CD14-positive monocyte (primary cell): ENCODE measurements at regions of chr19 and their contacts with region 1.

Region 1: GRCh38 chr19:58182989-58183816 is at the start of gene ZNF274:
- DNase-seq: peak; percentile 92 to 95 (median 95)
- H3K4me3 ChIP-seq: peak within 1 kb of the TSS; percentile 60 to 84 (median 67)
- H3K4me3 Mint-ChIP-seq: peak within 1 kb of the TSS; percentile 83 to 91
- H3K27ac ChIP-seq: peak within 1 kb of the TSS; percentile 97 to 99
- H3K27ac Mint-ChIP-seq: peak within 1 kb of the TSS; percentile 98 to 100 (median 99)
- H3K4me1 ChIP-seq: peaks cover 13 to 14% of the 10 kb centered on the region in 2 donors
- H3K4me1 Mint-ChIP-seq: peaks cover 14% of the 10 kb centered on the region
- H3K27me3 ChIP-seq: no peaks in the 10 kb centered on the region
- H3K27me3 Mint-ChIP-seq: peaks cover 1 to 5% (median 1%) of the 10 kb centered on the region in 3 donors
- CTCF ChIP-seq: no peak
- polyA plus RNA-seq, gene ZNF274: 5.8 to 10.1 (median 9.0) TPM

Region 2: GRCh38 chr19:56403764-56404704 is 1779.2 kb before region 1 on chr19 and contains the start of gene ZNF583:
- intact Hi-C with region 1: loop called in 1 of 2 experiments (anchors 10 kb)
- DNase-seq: peak; percentile 88 to 92 (median 91)
- H3K4me3 ChIP-seq: peak within 1 kb of the TSS; percentile 74 to 90 (median 80)
- H3K4me3 Mint-ChIP-seq: peak within 1 kb of the TSS; percentile 91 to 94
- H3K27ac ChIP-seq: peak within 1 kb of the TSS; percentile 69 to 91
- H3K27ac Mint-ChIP-seq: peak within 1 kb of the TSS; percentile 86 to 98 (median 94)
- H3K4me1 ChIP-seq: peaks cover 15 to 18% of the 10 kb centered on the region in 2 donors
- H3K4me1 Mint-ChIP-seq: peaks cover 19% of the 10 kb centered on the region
- H3K27me3 ChIP-seq: no peaks in the 10 kb centered on the region
- H3K27me3 Mint-ChIP-seq: peaks cover 0 to 5% (median 0%) of the 10 kb centered on the region in 3 donors
- CTCF ChIP-seq: no peak
- polyA plus RNA-seq, gene ZNF583: 1.3 to 6.6 (median 4.0) TPM

Region 3: GRCh38 chr19:58002384-58003173 is 180.6 kb before region 1 on chr19 and contains the start of gene ZNF606:
- intact Hi-C with region 1: loop called (anchors 5 to 10 kb)
- DNase-seq: peak; percentile 80 to 81 (median 80)
- H3K4me3 ChIP-seq: peak within 1 kb of the TSS; percentile 42 to 91 (median 89)
- H3K4me3 Mint-ChIP-seq: peak within 1 kb of the TSS; percentile 87 to 88
- H3K27ac ChIP-seq: peak within 1 kb of the TSS; percentile 55 to 89
- H3K27ac Mint-ChIP-seq: peak within 1 kb of the TSS; percentile 70 to 92 (median 87)
- H3K4me1 ChIP-seq: peaks cover 22 to 25% of the 10 kb centered on the region in 2 donors
- H3K4me1 Mint-ChIP-seq: peaks cover 33% of the 10 kb centered on the region
- H3K27me3 ChIP-seq: no peaks in the 10 kb centered on the region
- H3K27me3 Mint-ChIP-seq: peaks cover 0 to 1% (median 1%) of the 10 kb centered on the region in 3 donors
- CTCF ChIP-seq: no peak
- polyA plus RNA-seq, gene ZNF606: 0.87 to 1.7 (median 1.2) TPM

Region 4: DNA sequence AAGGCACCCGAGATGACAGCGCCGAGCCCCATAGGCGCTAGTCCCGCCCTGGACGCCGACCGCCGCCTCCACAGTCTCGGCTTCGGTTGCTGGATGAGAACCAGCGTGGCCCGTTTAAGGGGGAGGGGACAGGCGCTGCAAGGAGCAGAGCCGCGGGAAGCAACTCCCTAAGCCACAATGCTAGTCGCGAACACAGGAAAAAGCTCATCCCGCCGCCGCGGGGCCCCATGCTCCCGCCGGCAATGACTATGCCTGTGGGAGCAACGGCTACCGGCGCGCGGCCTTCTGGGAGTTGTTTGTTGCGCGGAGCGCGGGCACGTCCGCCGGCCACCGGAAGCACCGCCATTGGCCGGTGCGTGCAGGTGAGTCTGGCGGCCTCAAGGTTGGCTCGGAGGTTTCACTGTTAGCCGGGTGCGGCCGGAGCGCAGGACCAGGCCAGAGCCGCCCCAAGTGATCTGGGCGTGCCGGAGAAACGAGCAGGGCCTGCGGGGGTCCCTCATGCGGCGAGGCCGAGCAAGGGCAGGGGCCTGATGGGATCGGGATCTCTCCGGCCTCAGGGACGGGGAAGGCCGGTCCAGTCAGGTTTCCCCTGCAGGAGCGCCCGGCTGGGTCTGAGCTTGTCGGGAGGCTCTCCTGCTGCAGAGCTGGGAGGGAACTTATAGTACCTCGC is 45.5 kb after region 1 on chr19 and contains the start of gene ZNF544:
- intact Hi-C with region 1: no loop called
- DNase-seq: peak; percentile 13 to 18 (median 15)
- H3K4me3 ChIP-seq: peak within 1 kb of the TSS; percentile 51 to 88 (median 60)
- H3K4me3 Mint-ChIP-seq: peak within 1 kb of the TSS; percentile 94 to 97
- H3K27ac ChIP-seq: peak within 1 kb of the TSS; percentile 15 to 65
- H3K27ac Mint-ChIP-seq: peak within 1 kb of the TSS; percentile 58 to 91 (median 84)
- H3K4me1 ChIP-seq: peaks cover 13 to 14% of the 10 kb centered on the region in 2 donors
- H3K4me1 Mint-ChIP-seq: peaks cover 14% of the 10 kb centered on the region
- H3K27me3 ChIP-seq: no peaks in the 10 kb centered on the region
- H3K27me3 Mint-ChIP-seq: peaks cover 0 to 8% (median 2%) of the 10 kb centered on the region in 3 donors
- CTCF ChIP-seq: no peak
- polyA plus RNA-seq, gene ZNF544: 1.5 to 7.9 (median 2.2) TPM

Region 5: DNA sequence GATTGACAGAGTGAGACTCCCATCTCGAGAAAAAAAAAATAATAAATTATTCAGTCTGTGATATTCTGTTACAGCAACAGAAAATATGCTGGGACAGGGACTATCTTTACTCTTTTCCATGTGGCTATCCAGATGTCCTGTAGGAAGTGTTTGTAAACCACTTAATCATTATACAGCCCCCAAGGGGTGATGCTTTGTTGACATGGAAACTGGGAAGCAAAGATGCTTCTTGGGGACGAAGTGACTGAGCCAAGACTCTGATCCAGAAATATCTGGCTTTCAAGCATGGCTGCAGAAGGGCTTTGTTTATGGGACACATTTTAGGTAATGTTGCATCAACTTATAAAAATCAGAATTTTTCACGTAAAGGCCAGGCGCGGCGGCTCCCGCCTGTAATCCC is 101.0 kb after region 1 on chr19:
- intact Hi-C with region 1: loop called (anchors 5 kb)
- DNase-seq: no peak
- H3K4me3 ChIP-seq: no peak overlapping the region
- H3K4me3 Mint-ChIP-seq: no peak overlapping the region
- H3K27ac ChIP-seq: no peak overlapping the region
- H3K27ac Mint-ChIP-seq: no peak overlapping the region
- H3K4me1 ChIP-seq: peaks cover 8 to 11% of the 10 kb centered on the region in 2 donors
- H3K4me1 Mint-ChIP-seq: peaks cover 13% of the 10 kb centered on the region
- H3K27me3 ChIP-seq: no peaks in the 10 kb centered on the region
- H3K27me3 Mint-ChIP-seq: peaks cover 0 to 2% (median 0%) of the 10 kb centered on the region in 3 donors
- CTCF ChIP-seq: no peak

Region 6: GRCh38 chr19:58380722-58381466 is 197.7 kb after region 1 on chr19 and contains the start of gene ZNF837:
- intact Hi-C with region 1: loop called in 1 of 2 experiments (anchors 2 kb)
- DNase-seq: peak; percentile 99 to 100 (median 100)
- H3K4me3 ChIP-seq: peak within 1 kb of the TSS; percentile 54 to 86 (median 78)
- H3K4me3 Mint-ChIP-seq: peak within 1 kb of the TSS; percentile 82 to 92
- H3K27ac ChIP-seq: peak within 1 kb of the TSS; percentile 81 to 95
- H3K27ac Mint-ChIP-seq: peak within 1 kb of the TSS; percentile 78 to 98 (median 95)
- H3K4me1 ChIP-seq: peaks cover 26 to 31% of the 10 kb centered on the region in 2 donors
- H3K4me1 Mint-ChIP-seq: peaks cover 28% of the 10 kb centered on the region
- H3K27me3 ChIP-seq: no peaks in the 10 kb centered on the region
- H3K27me3 Mint-ChIP-seq: peaks cover 0 to 2% (median 0%) of the 10 kb centered on the region in 3 donors
- CTCF ChIP-seq: no peak
- polyA plus RNA-seq, gene ZNF837: 0.13 to 0.72 (median 0.33) TPM